Ascending aorta (tissue), 2 donors: ENCODE measurements at regions of chr18 and their contacts with region 1.

Region 1: GRCh38 chr18:35240664-35241447 is at the start of gene ZNF397:
- DNase-seq: peak; percentile 89 to 99
- H3K4me3 ChIP-seq: peak within 1 kb of the TSS; percentile 69 to 74
- H3K27ac ChIP-seq: peak within 1 kb of the TSS; percentile 97 to 99
- H3K4me1 ChIP-seq: peaks cover 3 to 10% of the 10 kb centered on the region in 2 donors
- H3K27me3 ChIP-seq: no peaks in the 10 kb centered on the region
- CTCF ChIP-seq: no peak
- total RNA-seq, gene ZNF397: 13.9 TPM

Region 2: DNA sequence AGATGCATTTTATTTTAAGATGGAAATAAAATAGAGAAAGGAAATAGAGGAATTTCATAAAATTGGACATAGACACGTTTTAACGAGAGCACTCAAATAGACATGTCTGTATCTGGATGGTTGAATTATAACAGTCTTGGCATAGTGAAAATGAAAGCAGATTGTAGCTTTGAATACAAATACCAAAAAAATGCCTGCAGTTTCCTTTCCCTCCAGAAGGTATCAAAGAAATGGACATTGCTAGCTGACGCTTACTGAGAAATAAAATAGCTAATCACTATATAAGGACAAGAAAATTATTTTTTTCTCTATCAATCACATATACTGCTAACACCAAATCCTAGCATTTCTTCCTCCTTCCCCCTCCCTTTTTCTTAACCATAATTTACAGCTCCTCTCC is 211.1 kb before region 1 on chr18:
- intact Hi-C with region 1: loop called (anchors 5 kb)
- DNase-seq: no peak
- H3K4me3 ChIP-seq: peak overlapping the region; percentile 36 to 42
- H3K27ac ChIP-seq: peak overlapping the region in 1 of 2 donors; percentile 12
- H3K4me1 ChIP-seq: peaks cover 4 to 6% of the 10 kb centered on the region in 2 donors
- H3K27me3 ChIP-seq: no peaks in the 10 kb centered on the region
- CTCF ChIP-seq: no peak

Region 3: GRCh38 chr18:35343936-35344735 is 103.3 kb after region 1 on chr18 and contains the start of gene ZNF24:
- intact Hi-C with region 1: loop called (anchors 1 kb)
- DNase-seq: peak; percentile 84 to 98
- H3K4me3 ChIP-seq: peak within 1 kb of the TSS; percentile 70 to 96
- H3K27ac ChIP-seq: peak within 1 kb of the TSS; percentile 93 to 100
- H3K4me1 ChIP-seq: peaks cover 10 to 17% of the 10 kb centered on the region in 2 donors
- H3K27me3 ChIP-seq: no peaks in the 10 kb centered on the region
- CTCF ChIP-seq: no peak
- total RNA-seq, gene ZNF24: 11.5 TPM

Region 4: DNA sequence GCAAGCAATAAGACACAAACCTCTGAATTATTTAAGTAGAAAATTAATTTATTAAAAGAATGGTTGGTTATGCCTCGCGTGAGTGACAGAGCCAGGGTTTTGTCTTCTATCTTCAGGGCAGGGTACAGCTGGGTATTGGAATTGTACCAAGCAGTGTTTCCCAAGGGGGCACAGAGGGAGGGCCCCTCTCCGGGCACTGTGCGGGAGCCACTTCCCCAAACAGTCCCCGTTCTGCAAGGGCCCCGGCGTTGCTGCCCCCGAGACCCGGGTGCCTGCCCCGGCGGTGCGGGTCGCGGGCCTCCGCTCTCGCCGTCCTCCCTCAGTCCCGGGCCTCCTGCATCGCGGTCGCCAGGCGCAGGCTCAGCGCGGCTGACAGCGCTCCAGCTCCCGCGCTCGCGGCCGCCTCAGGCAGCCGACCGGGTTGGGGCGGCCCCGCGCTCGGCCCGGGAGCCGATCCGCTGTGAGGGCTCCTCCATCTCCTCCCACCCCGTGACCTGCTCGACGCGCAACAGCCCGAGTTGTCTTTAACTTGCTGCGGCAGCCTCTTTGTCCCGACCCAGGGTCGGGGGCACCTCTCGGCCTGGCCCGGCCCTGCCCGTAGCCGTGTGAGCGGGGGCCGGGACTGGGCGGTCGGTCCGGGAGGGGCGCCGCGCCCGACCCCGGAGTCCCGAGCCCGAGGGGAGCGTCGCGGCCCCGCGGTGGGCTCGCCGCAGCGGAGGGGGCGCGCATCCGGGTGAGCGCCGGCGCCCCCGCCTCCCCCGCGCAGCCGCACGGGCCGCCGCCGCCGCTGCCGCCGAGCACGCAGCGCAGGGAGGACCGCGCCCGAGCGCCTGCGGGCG is 340.1 kb after region 1 on chr18:
- intact Hi-C with region 1: loop called (anchors 2 kb)
- DNase-seq: peak in 1 of 2 donors; percentile 72
- H3K4me3 ChIP-seq: peak overlapping the region; percentile 84 to 86
- H3K27ac ChIP-seq: peak overlapping the region; percentile 93 to 100
- H3K4me1 ChIP-seq: peaks cover 0 to 8% of the 10 kb centered on the region in 2 donors
- H3K27me3 ChIP-seq: no peaks in the 10 kb centered on the region
- CTCF ChIP-seq: no peak